ENCODE measurements at regions of chr16 and their contacts with region 1.

Region 1: DNA sequence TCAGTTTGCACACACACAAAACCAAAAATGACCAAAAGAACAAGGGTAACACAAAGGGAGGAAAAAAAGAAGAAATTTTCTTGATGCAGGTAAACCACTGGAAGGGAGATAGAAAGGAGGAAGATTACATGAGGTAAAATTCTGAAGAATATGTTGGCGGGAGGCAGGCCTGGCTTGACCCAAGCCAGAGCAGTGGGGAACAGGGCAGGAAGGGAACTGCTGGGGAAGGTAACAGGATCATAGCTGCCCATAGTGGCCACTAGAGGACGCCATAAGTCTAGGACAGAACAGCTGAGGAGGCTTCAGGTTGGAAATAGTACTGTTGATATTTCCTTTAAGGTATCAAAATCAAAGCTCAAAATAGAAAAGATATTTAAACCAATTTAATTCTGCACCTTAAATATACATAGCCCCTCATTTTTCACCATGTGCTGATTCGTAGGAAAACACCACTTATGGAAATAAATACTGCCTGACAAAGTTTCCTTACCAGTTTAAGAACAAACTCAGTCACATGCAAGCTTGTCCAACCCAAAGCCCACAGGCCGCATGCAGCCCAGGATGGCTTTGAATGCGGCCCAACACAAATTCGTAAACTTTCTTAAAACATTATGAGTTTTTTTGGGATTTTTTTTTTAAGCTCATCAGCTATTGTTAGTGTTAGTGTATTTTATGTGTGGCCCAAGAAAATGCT is 15.5 kb downstream of the VPS35 start:
- DNase-seq: no peak
- H3K4me3 ChIP-seq: no peak overlapping the region
- H3K27ac ChIP-seq: no peak overlapping the region
- H3K4me1 ChIP-seq: no peaks in the 10 kb centered on the region
- H3K27me3 ChIP-seq: no peaks in the 10 kb centered on the region
- CTCF ChIP-seq: peak; percentile 91

Region 2: GRCh38 chr16:46583036-46583435 is 90.4 kb before region 1 on chr16:
- intact Hi-C with region 1: no loop called
- DNase-seq: no peak
- H3K4me3 ChIP-seq: no peak overlapping the region
- H3K27ac ChIP-seq: no peak overlapping the region
- H3K4me1 ChIP-seq: no peaks in the 10 kb centered on the region
- H3K27me3 ChIP-seq: no peaks in the 10 kb centered on the region
- CTCF ChIP-seq: no peak

Region 3: DNA sequence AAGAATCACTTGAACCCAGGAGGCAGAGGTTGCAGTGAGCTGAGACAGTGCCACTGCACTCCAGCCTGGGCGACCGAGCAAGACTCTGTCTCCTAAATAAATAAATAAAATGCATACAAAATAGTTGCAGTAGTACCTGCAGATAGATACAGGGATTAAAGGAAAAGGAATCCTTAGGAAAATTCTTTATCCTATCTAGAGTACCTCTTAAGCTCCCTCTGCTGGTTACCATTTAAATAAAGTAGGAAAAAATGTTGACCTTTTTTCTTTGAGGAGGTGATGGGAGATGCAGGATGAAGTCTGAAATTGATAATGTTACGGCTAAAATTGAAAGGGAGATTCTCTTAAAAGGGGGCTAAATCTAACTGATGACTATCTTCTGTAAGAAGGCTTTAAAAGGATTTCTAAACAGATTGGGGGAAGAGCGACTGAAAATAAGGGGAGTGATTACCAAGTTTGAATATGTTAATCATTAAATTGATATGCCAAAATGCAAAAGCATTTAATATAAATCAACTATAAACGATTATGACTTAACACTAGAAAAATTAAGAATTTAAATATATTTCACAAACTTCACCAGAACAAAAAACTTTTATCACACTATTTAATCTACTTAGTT is 128.1 kb after region 1 on chr16:
- intact Hi-C with region 1: loop called (anchors 5 kb)
- DNase-seq: no peak
- H3K4me3 ChIP-seq: no peak overlapping the region
- H3K27ac ChIP-seq: no peak overlapping the region
- H3K4me1 ChIP-seq: no peaks in the 10 kb centered on the region
- H3K27me3 ChIP-seq: no peaks in the 10 kb centered on the region
- CTCF ChIP-seq: no peak

Region 4: GRCh38 chr16:46859719-46860152 is 186.3 kb after region 1 on chr16:
- intact Hi-C with region 1: no loop called
- DNase-seq: peak; percentile 41
- H3K4me3 ChIP-seq: no peak overlapping the region
- H3K27ac ChIP-seq: no peak overlapping the region
- H3K4me1 ChIP-seq: no peaks in the 10 kb centered on the region
- H3K27me3 ChIP-seq: no peaks in the 10 kb centered on the region
- CTCF ChIP-seq: no peak

Region 5: GRCh38 chr16:46918861-46919792 is 245.7 kb after region 1 on chr16:
- intact Hi-C with region 1: loop called (anchors 5 kb)
- DNase-seq: no peak
- H3K4me3 ChIP-seq: no peak overlapping the region
- H3K27ac ChIP-seq: no peak overlapping the region
- H3K4me1 ChIP-seq: no peaks in the 10 kb centered on the region
- H3K27me3 ChIP-seq: no peaks in the 10 kb centered on the region
- CTCF ChIP-seq: no peak